Left colon (tissue), 2 donors: ENCODE measurements at regions of chr5 and their contacts with region 1.

Region 1: DNA sequence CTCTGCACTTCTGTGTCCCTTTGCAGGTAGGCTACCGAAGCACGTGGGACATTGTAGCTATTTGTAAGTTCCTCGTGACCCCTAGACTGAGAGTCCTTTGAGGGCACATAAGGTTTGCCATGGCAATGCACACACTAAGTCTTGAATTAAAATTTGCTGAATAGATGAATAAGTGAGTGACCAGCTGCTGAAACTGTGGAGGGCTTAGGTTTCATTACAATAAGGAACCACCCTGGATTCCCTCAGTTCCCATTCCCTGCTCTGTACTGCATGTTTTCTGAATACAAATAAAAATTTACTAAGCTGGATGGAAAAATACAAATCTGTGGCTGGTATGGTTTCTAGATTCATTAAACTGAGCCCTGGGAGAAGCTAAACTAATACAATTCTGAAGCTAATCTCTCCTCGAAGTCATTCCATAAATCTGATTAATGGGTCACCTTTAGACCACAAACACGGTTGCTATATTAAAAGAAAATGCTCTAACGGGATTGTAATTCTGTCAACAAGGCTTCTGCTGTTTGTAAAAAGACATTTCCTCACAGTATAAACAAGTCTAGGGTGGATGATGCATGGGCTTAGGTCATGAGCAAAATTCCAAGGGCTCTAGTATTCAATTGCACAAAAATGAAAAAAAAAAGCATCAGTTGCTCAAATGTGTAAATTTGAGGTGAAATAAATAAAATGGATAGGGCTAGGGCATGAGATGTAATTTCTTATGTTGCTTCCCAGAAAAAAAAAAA is 172.3 kb downstream of the ATP10B start:
- DNase-seq: no peak
- ATAC-seq: no peak

Region 2: GRCh38 chr5:160245506-160246086 is 434.1 kb before region 1 on chr5:
- intact Hi-C with region 1: no loop called
- DNase-seq: no peak
- ATAC-seq: peak; percentile 7

Region 3: GRCh38 chr5:160269017-160269416 is 410.7 kb before region 1 on chr5:
- intact Hi-C with region 1: no loop called
- DNase-seq: peak; percentile 72
- ATAC-seq: peak; percentile 11

Region 4: DNA sequence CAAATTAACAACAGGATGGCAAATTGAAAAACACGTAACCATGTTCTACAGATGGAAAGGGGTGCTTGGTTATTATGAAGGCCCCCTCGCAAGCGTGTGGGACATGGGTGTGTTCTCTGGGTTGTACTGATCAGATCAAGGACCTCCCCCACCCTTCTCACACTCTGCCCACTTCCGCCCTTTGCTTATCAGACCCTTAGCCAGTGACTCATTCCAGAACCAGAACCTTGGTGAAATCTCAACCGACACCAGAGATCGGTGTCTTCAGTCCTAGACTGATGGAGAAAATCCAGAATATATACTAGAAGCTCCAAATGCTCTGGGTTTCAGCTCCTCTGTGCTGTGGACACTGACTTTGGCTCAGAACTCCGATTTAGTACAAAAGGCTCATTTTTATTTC is 193.2 kb before region 1 on chr5:
- intact Hi-C with region 1: no loop called
- DNase-seq: no peak
- ATAC-seq: no peak

Region 5: DNA sequence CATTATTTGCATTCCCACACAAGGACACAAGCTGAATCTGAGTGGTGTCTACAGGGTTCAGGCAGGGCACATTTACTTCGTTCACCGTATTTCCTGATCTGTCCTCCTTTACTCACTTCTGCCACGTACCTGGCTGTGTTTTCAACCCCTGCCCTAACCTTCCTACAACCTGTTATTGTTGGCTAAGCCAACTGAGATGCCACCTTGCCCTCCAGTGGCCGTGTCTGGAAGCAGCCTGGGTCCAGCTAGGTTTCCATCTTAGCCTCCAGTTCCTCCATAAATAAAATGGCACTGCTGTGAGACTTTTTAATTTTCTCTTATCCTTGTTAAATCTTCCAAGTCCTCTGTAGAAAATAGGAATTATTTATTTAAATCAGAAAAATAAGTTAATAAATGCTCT is 107.5 kb after region 1 on chr5:
- intact Hi-C with region 1: loop called in 1 of 2 experiments (anchors 5 kb)
- DNase-seq: peak; percentile 79 to 81
- ATAC-seq: peak; percentile 86

Region 6: GRCh38 chr5:160957312-160957861 is 277.6 kb after region 1 on chr5:
- intact Hi-C with region 1: no loop called
- DNase-seq: no peak
- ATAC-seq: no peak